Tibial artery (tissue), 4 donors: ENCODE measurements at regions of chr10 and their contacts with region 1.

Region 1: DNA sequence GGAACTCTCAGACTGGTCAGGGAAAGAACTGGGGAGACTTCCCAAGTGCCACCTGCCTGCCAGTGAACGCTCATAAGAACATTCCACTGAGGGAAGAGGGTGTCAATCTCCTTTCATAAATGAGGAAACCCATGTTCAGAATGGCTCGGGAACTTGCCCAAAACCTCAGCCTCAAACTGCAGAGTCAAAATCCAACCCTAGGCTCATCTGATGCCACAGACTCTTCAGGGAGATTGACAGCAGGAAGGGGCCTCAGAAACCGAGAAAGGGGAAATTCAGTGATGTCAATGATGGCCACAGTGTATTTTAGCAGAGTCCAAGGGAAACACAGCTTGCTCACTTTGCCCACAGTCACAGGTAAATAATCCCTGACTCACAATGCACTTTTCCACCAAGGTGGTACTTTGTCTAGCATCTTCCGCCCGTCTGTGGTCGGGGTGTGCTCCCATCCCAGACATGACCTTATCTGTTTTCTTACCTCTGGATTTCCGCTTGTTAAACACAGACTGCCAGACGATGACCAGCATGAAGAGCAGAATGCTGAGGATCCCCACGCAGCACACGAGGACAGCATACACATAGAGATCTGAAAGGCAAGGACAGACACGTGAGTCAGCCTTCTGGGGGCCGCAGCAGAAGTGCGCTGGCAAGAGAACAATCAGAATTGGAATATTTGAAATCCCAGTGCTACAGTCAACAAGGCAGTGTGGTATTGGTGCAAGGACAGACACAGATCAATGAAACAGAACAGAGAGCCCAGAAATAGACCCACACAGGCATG is 38.4 kb downstream of the VSTM4 start:
- DNase-seq: no peak
- H3K4me3 ChIP-seq: no peak overlapping the region
- H3K27ac ChIP-seq: no peak overlapping the region
- H3K4me1 ChIP-seq: peaks cover 0 to 37% (median 21%) of the 10 kb centered on the region in 4 donors
- H3K27me3 ChIP-seq: no peaks in the 10 kb centered on the region
- CTCF ChIP-seq: no peak

Region 2: DNA sequence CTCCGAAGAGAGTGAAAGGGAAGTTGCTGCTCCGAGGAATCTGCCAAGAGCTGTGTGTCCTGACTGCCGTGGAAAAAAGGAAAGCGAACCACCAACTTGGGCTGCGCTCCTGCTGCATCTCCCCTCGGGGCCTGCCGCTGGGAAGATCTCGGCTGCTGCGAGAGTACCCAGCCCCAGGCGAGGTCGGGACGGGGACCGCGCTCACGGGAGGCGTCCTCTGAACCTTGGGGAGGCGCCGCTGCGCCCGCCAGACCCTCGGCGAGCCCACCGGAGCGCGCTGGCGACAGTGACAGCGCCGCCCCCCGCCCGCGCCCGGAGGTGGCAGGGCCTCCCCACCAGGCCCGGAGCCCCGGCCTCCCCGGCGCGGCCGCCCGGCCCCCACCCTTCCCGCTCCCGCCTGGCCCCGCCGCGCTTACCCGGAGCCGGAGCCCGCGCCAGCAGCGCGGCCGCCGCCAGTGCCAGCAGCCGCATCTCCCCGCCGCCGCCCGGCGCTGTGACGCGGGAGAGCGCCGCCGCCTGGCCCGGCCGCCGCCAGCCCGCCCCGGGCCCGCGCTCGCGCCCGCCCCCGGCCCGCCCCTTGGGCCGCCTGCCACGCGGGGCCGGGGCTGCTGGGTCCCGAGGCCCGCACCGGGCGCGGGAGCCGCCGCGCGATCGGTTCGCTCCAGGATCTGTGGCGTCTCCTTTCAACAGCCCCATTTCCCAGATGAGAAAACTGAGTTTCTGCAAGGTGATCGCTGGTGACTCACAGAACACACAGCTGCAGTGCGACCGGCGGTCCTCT is 38.3 kb after region 1 on chr10 and contains the start of gene VSTM4:
- intact Hi-C with region 1: loop called (anchors 5 kb)
- DNase-seq: peak in 1 of 2 donors; percentile 74
- H3K4me3 ChIP-seq: peak within 1 kb of the TSS; percentile 68 to 83
- H3K27ac ChIP-seq: peak within 1 kb of the TSS; percentile 88 to 90
- H3K4me1 ChIP-seq: peaks cover 0 to 51% (median 30%) of the 10 kb centered on the region in 4 donors
- H3K27me3 ChIP-seq: no peaks in the 10 kb centered on the region
- CTCF ChIP-seq: no peak